ENCODE measurements at regions of chr16 and their contacts with region 1.

Region 1: GRCh38 chr16:4358831-4359561 is 7.9 kb upstream of the PAM16 start:
- DNase-seq: peak in 1 of 2 donors; percentile 46
- ATAC-seq: peak in 1 of 2 donors; percentile 72
- H3K4me3 ChIP-seq: no peak overlapping the region
- H3K27ac ChIP-seq: no peak overlapping the region
- H3K4me1 ChIP-seq: no peaks in the 10 kb centered on the region
- H3K27me3 ChIP-seq: no peaks in the 10 kb centered on the region
- CTCF ChIP-seq: peak; percentile 94 to 99 (median 97)
- POLR2A ChIP-seq: no peak

Region 2: DNA sequence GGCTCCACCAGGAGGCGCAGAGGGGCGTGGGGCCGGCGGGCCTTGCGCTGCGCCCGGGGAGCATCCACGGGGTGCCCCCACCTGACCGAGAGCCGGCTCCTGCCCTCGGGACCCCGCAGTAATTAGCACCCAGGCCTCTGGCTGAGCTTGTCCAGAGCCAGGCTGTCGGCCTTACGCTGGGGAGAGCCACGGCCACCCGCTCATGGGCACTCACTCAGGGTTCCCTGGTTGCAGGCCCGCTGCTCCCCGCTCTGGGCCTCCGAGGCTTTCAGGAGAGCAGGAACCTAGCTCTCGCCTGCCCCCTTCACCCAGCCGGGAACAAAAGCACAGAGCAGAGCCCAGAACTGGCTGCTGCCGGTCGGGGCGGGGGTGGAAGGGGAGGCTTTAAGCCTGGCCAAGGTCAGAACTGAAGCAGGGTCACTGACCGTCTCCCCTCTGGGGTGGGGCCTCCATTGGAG is 30.9 kb before region 1 on chr16:
- in situ Hi-C with region 1: no loop called
- intact Hi-C with region 1: no loop called
- DNase-seq: peak; percentile 40 to 52
- ATAC-seq: peak; percentile 37 to 62
- H3K4me3 ChIP-seq: peak overlapping the region; percentile 49 to 59 (median 56)
- H3K27ac ChIP-seq: peak overlapping the region; percentile 68 to 74 (median 72)
- H3K4me1 ChIP-seq: peaks cover 33 to 38% of the 10 kb centered on the region in 2 donors
- H3K27me3 ChIP-seq: no peaks in the 10 kb centered on the region
- CTCF ChIP-seq: peak; percentile 36 to 65 (median 51)
- POLR2A ChIP-seq: no peak

Region 3: GRCh38 chr16:4402439-4403132 is 43.6 kb after region 1 on chr16:
- in situ Hi-C with region 1: loop called in 2 of 4 experiments (anchors 5 kb)
- intact Hi-C with region 1: loop called (anchors 1 kb)
- DNase-seq: peak; percentile 54 to 71
- ATAC-seq: peak; percentile 87 to 98
- H3K4me3 ChIP-seq: no peak overlapping the region
- H3K27ac ChIP-seq: no peak overlapping the region
- H3K4me1 ChIP-seq: no peaks in the 10 kb centered on the region
- H3K27me3 ChIP-seq: no peaks in the 10 kb centered on the region
- CTCF ChIP-seq: peak; percentile 93 to 97 (median 96)
- POLR2A ChIP-seq: no peak